Caco-2 (cell line): ENCODE measurements at regions of chr3 and their contacts with region 1.

Region 1: GRCh38 chr3:30667280-30667651 is 60.9 kb downstream of the TGFBR2 start:
- DNase-seq: peak; percentile 64 to 72
- H3K4me3 ChIP-seq: no peak overlapping the region
- H3K4me3 Mint-ChIP-seq: no peak overlapping the region
- H3K27ac Mint-ChIP-seq: no peak overlapping the region
- H3K4me1 ChIP-seq: peaks cover 36% of the 10 kb centered on the region
- H3K4me1 Mint-ChIP-seq: peaks cover 63% of the 10 kb centered on the region
- H3K27me3 ChIP-seq: no peaks in the 10 kb centered on the region
- H3K27me3 Mint-ChIP-seq: no peaks in the 10 kb centered on the region
- CTCF ChIP-seq: no peak

Region 2: DNA sequence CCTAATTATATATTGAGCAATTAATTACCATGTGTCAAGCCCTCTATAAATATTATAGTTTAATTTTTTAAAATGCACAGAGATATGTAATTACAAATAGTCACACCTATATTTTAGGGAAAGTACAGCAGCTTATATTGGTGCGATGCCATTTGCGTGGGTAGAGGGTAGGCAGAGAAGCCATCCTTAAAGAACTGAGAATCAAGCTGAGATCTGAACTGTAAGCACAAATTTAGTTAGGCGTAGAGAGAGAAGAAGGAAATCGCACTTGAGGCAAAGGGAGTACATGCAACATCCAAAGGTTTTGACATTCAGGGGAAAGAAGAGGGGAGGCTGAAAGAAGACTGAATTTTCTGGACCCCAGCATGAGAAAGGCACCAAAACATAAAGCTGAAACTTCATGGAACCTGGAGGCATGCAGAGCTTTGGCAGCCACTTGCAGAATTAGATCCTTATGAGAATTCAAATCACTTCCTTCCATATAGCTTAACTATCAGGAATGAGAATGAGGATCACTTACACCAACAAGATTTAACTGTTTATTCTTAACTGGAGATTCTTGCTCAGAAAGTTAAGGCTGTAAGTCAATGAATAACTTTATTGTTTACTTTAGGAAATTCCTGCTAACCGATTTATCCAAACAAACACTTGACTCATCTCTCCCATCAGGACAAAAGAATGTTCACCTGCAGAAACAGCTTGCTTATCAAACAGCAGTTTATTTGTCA is 53.5 kb after region 1 on chr3:
- CTCF ChIA-PET with region 1: no interaction called
- POLR2A ChIA-PET with region 1: no interaction called
- intact Hi-C with region 1: loop called (anchors 2 kb)
- DNase-seq: peak in 1 of 2 experiments; percentile 71
- H3K4me3 ChIP-seq: no peak overlapping the region
- H3K4me3 Mint-ChIP-seq: peak overlapping the region; percentile 26
- H3K27ac Mint-ChIP-seq: peak overlapping the region; percentile 83
- H3K4me1 ChIP-seq: peaks cover 34% of the 10 kb centered on the region
- H3K4me1 Mint-ChIP-seq: peaks cover 34% of the 10 kb centered on the region
- H3K27me3 ChIP-seq: no peaks in the 10 kb centered on the region
- H3K27me3 Mint-ChIP-seq: no peaks in the 10 kb centered on the region
- CTCF ChIP-seq: no peak

Region 3: DNA sequence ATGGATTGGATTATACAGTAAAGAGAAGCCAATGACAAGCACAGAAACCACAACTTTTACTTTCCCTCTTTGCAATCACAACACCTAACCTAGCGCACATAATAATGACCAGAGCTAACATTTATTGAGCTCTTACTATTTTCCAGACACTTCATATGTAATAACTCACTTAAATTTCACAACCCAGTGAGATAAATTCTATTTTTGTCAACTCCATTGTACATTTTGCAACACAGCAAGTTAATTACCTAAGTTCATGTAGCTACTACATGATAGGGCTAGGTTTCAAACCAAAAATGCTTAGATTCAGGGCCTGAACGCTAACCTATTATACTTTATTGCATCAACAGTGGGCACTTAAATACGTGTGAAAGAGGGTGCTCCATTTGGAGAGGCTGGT is 137.7 kb after region 1 on chr3:
- CTCF ChIA-PET with region 1: no interaction called
- POLR2A ChIA-PET with region 1: no interaction called
- intact Hi-C with region 1: no loop called
- DNase-seq: no peak
- H3K4me3 ChIP-seq: no peak overlapping the region
- H3K4me3 Mint-ChIP-seq: no peak overlapping the region
- H3K27ac Mint-ChIP-seq: no peak overlapping the region
- H3K4me1 ChIP-seq: no peaks in the 10 kb centered on the region
- H3K4me1 Mint-ChIP-seq: no peaks in the 10 kb centered on the region
- H3K27me3 ChIP-seq: no peaks in the 10 kb centered on the region
- H3K27me3 Mint-ChIP-seq: no peaks in the 10 kb centered on the region
- CTCF ChIP-seq: no peak